Lower leg skin (tissue), 4 donors: ENCODE measurements at regions of chr10 and their contacts with region 1.

Region 1: GRCh38 chr10:124049484-124049883 is 43.9 kb downstream of the CHST15 start:
- DNase-seq: no peak
- H3K4me3 ChIP-seq: no peak overlapping the region
- CTCF ChIP-seq: no peak
- POLR2A ChIP-seq: no peak

Region 2: DNA sequence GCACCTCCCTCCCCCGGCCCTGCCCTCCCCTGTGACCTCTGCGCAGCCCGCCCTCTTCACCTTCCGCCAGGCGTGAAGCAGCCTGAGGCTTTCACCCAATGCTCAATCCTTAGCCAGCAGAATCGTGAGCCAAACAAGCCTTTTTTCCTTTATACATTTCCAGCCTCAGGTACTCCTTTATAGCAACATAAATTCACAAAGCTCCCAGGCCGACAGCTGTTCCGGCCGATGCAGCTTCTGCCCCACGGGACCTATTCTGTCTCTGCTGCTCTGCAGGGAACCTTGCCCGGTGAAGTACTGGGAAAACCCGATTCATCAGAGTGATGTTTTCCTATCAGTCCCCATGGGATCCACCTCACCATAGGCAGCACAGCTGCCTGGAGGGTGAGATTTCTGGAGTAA is 43.5 kb before region 1 on chr10:
- intact Hi-C with region 1: loop called (anchors 2 kb)
- DNase-seq: peak in 1 of 2 donors; percentile 74
- H3K4me3 ChIP-seq: no peak overlapping the region
- CTCF ChIP-seq: no peak
- POLR2A ChIP-seq: no peak

Region 3: DNA sequence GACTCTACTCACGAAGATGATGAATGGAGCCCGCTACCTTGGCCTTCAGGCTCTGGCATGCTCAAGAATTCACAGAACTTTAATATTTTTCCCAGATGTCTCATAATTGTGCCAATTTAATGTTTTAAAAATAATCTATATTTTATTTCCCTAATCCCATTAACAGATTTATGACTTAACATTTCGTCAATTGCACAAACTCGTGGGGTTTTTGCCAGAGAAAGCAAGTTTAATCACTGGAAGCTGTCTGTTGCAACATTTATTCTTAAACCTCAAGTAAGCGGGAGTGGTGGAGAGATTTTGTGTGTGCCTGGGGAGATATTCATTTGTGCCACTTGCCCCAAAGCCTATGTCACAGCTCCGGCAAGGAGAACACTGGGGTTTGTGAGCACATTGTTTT is 1515.6 kb after region 1 on chr10:
- intact Hi-C with region 1: loop called (anchors 5 kb)
- DNase-seq: peak in 1 of 2 donors; percentile 26
- H3K4me3 ChIP-seq: no peak overlapping the region
- CTCF ChIP-seq: no peak
- POLR2A ChIP-seq: no peak